HepG2 (cell line): ENCODE measurements at regions of chr1 and their contacts with region 1.

Region 1: GRCh38 chr1:36269408-36269838 is 36.7 kb upstream of the SH3D21 start:
- DNase-seq: peak; percentile 94
- ATAC-seq: peak; percentile 99
- H3K4me3 ChIP-seq: peak overlapping the region in 2 of 3 experiments; percentile 28 to 32; a peak in 2 of 6 replicates
- H3K27ac ChIP-seq: peak overlapping the region; percentile 85
- H3K4me1 ChIP-seq: peaks cover 76% of the 10 kb centered on the region
- H3K27me3 ChIP-seq: no peaks in the 10 kb centered on the region
- CTCF ChIP-seq: no peak
- EP300 ChIP-seq: peak; percentile 88 to 93; a peak in 3 of 4 replicates
- POLR2A ChIP-seq: no peak
- RAD21 ChIP-seq: no peak

Region 2: GRCh38 chr1:35461966-35462651 is 807.3 kb before region 1 on chr1:
- CTCF ChIA-PET with region 1: no interaction called
- POLR2A ChIA-PET with region 1: no interaction called
- in situ Hi-C with region 1: no loop called
- intact Hi-C with region 1: no loop called
- DNase-seq: no peak
- ATAC-seq: no peak
- H3K4me3 ChIP-seq: no peak overlapping the region
- H3K27ac ChIP-seq: no peak overlapping the region
- H3K4me1 ChIP-seq: no peaks in the 10 kb centered on the region
- H3K27me3 ChIP-seq: no peaks in the 10 kb centered on the region
- CTCF ChIP-seq: no peak
- EP300 ChIP-seq: no peak
- POLR2A ChIP-seq: no peak
- RAD21 ChIP-seq: no peak

Region 3: DNA sequence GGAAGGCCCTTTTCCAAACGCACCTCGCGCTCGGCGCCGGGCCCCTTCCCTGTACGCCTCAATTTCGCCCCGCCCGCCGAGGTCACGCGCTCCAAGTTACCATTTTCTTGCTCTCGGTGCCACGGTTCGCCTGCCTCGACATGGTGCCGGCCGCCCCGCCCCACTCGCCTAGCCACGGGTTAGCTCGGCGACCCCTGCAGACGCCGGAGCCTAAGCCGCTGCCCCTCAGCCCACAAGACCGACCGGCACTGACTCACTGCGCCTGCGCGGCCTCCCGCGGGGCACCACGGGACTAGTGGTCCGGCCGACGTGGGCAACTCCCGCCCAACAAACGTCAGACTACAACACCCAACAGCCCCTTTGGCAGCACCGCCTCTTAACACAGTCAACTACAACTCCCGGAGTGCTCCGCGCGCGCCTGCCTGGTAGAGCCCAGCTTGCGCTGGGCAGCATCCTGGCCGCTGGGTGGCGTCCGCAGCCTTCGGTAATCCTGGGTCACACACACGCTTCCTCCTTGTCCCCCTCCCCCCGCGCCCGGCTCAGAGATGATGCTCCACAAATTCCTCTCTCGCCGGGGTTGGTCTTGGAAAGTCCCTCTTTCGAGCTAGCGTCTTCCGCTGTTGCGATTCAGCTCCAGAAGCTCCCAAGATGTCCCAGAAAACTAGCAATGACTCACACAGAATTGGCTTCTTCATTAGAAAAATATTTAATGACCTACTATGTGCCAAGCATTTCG is 120.0 kb before region 1 on chr1 and contains the start of gene TRAPPC3:
- CTCF ChIA-PET with region 1: no interaction called
- POLR2A ChIA-PET with region 1: interaction called, 10 read pairs
- in situ Hi-C with region 1: no loop called
- intact Hi-C with region 1: no loop called
- DNase-seq: peak; percentile 99
- ATAC-seq: peak; percentile 88
- H3K4me3 ChIP-seq: peak within 1 kb of the TSS; percentile 76 to 83 (median 81)
- H3K27ac ChIP-seq: peak within 1 kb of the TSS; percentile 80
- H3K4me1 ChIP-seq: peaks cover 58% of the 10 kb centered on the region
- H3K27me3 ChIP-seq: no peaks in the 10 kb centered on the region
- CTCF ChIP-seq: peak; percentile 98
- EP300 ChIP-seq: no peak
- POLR2A ChIP-seq: peak in 1 of 2 experiments; percentile 72; a peak in 2 of 4 replicates
- RAD21 ChIP-seq: peak; percentile 99
- total RNA-seq, gene TRAPPC3: 62.4 and 66.7 TPM in 2 replicates

Region 4: DNA sequence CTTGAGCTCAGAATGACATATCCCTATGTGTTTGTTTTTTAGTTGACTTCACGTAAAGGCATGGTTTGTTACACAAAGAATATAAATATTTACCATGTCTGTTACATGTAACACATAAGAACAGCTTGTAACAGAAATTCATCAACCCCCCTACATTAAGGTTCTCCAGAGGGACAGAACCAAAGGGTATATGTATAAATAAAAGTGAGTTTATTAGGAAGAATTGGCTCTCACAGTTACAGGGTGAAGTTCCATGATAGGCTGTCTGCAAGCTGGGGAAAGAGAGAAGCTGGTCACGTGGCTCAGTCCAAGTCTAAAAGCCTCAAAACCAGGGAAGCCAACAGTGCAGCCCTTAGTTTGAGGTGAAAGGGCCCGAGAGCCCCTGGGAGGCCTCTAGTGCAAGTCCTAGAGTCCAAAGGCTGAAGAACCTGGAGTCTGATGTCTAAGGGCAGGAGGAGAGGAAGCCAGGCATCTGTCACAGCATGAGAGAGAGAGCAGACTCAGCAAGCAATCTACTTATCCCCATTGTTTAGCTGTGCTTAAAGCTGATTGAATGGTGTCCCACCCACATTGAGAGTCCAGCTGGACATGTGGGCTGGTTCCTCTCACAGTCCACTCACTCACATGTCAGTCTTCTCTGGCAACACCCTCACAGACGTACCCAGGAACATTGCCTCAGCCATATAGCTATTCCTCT is 29.3 kb before region 1 on chr1:
- CTCF ChIA-PET with region 1: no interaction called
- POLR2A ChIA-PET with region 1: interaction called, 56 read pairs
- in situ Hi-C with region 1: no loop called
- intact Hi-C with region 1: no loop called
- DNase-seq: peak; percentile 93
- ATAC-seq: peak; percentile 96
- H3K4me3 ChIP-seq: peak overlapping the region in 2 of 3 experiments; percentile 26 to 29; a peak in 3 of 6 replicates
- H3K27ac ChIP-seq: peak overlapping the region; percentile 89
- H3K4me1 ChIP-seq: peaks cover 94% of the 10 kb centered on the region
- H3K27me3 ChIP-seq: no peaks in the 10 kb centered on the region
- CTCF ChIP-seq: no peak
- EP300 ChIP-seq: peak in 1 of 2 experiments; percentile 72; a peak in 2 of 4 replicates
- POLR2A ChIP-seq: peak; percentile 34 to 65; a peak in 2 of 4 replicates
- RAD21 ChIP-seq: peak; percentile 21; the same call in 1 of the 2 replicates

Region 5: GRCh38 chr1:36248250-36248894 is 21.1 kb before region 1 on chr1:
- CTCF ChIA-PET with region 1: no interaction called
- POLR2A ChIA-PET with region 1: interaction called, 24 read pairs
- in situ Hi-C with region 1: no loop called
- intact Hi-C with region 1: no loop called
- DNase-seq: peak; percentile 95
- ATAC-seq: peak; percentile 94
- H3K4me3 ChIP-seq: no peak overlapping the region
- H3K27ac ChIP-seq: peak overlapping the region; percentile 85
- H3K4me1 ChIP-seq: peaks cover 81% of the 10 kb centered on the region
- H3K27me3 ChIP-seq: no peaks in the 10 kb centered on the region
- CTCF ChIP-seq: no peak
- EP300 ChIP-seq: peak; percentile 87 to 91
- POLR2A ChIP-seq: no peak
- RAD21 ChIP-seq: no peak

Region 6: DNA sequence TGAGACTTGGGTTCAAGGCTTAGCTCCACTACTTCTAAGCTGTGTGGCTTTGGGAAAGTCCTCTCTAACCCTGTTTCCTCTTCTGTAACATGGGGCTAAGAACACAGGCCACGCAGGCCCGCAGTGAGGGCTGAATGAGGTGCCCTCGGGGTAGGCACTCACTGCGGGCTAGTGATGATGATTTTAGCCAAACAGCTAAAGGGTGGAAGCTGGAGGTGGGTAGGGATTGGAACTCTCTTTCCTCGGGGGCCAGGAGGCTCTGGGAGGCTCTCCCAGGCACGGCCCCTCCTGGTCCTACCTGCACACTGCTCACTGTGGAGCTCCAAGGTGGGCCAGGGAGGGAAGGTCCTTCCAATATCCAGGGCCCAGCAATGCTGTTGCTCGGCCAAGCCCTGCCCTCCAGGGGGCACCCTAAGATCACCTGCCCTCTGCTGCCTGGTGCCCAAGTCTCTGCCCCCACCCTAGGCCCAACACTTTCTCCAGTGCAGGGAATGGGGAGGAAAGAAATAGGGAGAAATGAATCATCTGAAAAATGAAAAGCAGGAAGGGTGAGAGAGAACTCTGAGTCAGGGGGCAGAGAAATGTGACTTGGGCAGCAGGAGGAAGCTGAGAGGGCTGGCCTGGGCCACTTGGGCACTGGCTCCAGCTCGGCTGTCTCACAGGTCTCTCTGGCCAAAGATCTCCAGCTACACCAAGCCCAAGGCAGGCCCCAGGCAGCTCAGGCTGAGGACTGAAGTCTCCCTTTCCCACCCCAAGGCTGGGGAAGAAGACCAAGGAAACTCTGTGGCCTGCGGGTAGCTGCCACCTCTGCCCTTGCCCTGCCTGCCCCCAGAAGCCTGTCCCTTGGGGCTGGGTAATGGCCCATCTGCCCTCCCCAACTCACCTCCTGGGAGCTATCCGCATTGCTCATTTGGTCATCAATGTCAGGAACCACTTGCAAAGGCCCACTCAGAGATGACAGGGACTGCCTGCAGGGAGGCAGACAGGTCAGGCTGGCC is 73.4 kb after region 1 on chr1:
- CTCF ChIA-PET with region 1: no interaction called
- POLR2A ChIA-PET with region 1: no interaction called
- in situ Hi-C with region 1: no loop called
- intact Hi-C with region 1: no loop called
- DNase-seq: no peak
- ATAC-seq: peak; percentile 79
- H3K4me3 ChIP-seq: no peak overlapping the region
- H3K27ac ChIP-seq: no peak overlapping the region
- H3K4me1 ChIP-seq: peaks cover 14% of the 10 kb centered on the region; the same call in 1 of the 2 replicates
- H3K27me3 ChIP-seq: no peaks in the 10 kb centered on the region
- CTCF ChIP-seq: peak; percentile 86
- EP300 ChIP-seq: no peak
- POLR2A ChIP-seq: no peak
- RAD21 ChIP-seq: peak; percentile 81